ENCODE measurements at regions of chr10 and their contacts with region 1.

Region 1: GRCh38 chr10:29496341-29497162 is 138.2 kb downstream of the SVIL start:
- DNase-seq: peak; percentile 80
- ATAC-seq: peak; percentile 87
- H3K4me3 Mint-ChIP-seq: no peak overlapping the region
- H3K27ac Mint-ChIP-seq: no peak overlapping the region
- H3K4me1 Mint-ChIP-seq: no peaks in the 10 kb centered on the region
- H3K27me3 Mint-ChIP-seq: no peaks in the 10 kb centered on the region
- CTCF ChIP-seq: peak; percentile 94

Region 2: DNA sequence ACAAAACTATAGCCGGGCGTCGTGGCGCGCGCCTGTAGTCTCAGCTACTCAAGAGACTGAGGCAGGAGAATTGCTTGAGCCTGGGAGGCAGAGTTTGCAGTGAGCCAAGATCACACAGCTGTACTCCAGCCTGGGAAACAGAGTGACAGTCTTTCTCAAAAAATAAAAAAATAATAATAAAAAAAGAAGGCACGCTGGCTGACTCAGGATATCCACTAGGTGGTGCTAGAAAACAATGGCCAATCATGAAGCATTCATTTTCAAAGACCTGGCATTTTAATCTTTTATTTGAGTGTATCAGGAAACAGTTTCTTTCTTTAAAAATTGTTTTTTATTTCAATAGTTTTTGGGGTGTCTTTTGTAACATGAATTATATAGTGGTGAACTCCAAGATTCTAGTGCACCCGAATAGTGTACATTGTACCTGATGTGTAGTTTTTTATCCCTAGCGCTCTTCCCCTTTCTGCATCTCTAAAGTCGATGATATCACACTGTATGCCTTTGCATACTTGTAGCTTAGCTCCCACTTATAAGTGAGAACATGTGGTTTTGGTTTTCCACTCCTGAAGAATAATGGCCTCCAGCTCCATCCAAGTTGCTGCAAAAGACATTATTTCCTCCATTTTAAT is 119.1 kb before region 1 on chr10:
- CTCF ChIA-PET with region 1: interaction called, 16 read pairs
- POLR2A ChIA-PET with region 1: no interaction called
- intact Hi-C with region 1: loop called (anchors 10 kb)
- DNase-seq: peak; percentile 4
- ATAC-seq: no peak
- H3K4me3 Mint-ChIP-seq: no peak overlapping the region
- H3K27ac Mint-ChIP-seq: no peak overlapping the region
- H3K4me1 Mint-ChIP-seq: peaks cover 7% of the 10 kb centered on the region
- H3K27me3 Mint-ChIP-seq: peaks cover 1% of the 10 kb centered on the region
- CTCF ChIP-seq: peak; percentile 78

Region 3: DNA sequence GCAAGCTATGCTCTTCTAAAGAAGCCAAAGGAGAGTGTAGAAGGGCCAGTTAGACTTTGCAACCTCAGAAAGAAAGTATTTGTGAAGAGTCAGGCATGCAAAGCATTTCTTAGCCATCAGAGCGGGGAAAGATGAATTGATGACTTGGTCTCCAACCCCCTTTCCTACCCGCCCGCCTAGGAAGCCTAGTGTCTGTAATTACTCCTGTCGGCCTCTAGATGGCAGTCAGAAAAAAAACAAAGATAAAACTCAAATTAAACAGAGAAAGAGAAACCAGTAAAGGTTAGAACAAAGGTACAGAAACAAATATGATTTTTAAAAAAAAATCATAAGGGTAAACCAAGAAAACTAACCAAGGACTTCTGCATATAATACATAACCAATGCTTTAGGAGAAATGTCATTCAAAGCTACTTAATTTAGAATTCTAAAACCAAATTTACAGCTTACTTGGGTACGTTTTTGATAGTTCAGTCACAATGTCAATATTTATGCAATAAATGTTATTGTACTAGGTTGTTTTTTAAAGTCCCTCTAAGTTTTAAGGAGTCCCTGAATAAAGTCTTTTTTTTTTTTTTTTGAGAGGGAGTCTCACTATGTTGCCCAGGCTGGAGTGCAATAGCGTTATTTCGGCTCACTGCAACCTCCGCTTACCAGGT is 110.1 kb before region 1 on chr10:
- CTCF ChIA-PET with region 1: interaction called, 12 read pairs
- POLR2A ChIA-PET with region 1: no interaction called
- intact Hi-C with region 1: loop called (anchors 10 kb)
- DNase-seq: peak; percentile 27
- ATAC-seq: peak; percentile 82
- H3K4me3 Mint-ChIP-seq: no peak overlapping the region
- H3K27ac Mint-ChIP-seq: no peak overlapping the region
- H3K4me1 Mint-ChIP-seq: peaks cover 3% of the 10 kb centered on the region
- H3K27me3 Mint-ChIP-seq: peaks cover 2% of the 10 kb centered on the region
- CTCF ChIP-seq: peak; percentile 61

Region 4: DNA sequence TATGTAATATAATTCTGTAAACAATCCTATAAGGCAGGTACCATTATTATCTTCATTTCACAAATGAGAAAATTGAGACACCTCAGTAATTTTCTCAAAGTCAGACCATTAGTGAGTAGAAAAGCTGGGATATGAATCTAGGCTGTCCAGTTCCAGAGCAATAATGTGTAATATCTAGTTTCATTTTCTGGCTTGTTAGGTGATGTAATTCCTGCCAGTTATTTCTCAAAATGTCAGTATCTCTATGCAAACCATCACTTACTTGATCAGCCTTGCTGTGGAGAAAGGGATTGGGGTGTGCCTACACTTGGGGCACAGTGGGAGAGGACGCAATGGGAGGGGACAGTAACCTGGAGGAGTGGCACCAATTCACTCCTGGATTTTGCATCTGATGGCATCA is 50.2 kb before region 1 on chr10:
- CTCF ChIA-PET with region 1: interaction called, 19 read pairs
- POLR2A ChIA-PET with region 1: no interaction called
- intact Hi-C with region 1: no loop called
- DNase-seq: no peak
- ATAC-seq: no peak
- H3K4me3 Mint-ChIP-seq: no peak overlapping the region
- H3K27ac Mint-ChIP-seq: peak overlapping the region; percentile 59
- H3K4me1 Mint-ChIP-seq: peaks cover 17% of the 10 kb centered on the region
- H3K27me3 Mint-ChIP-seq: no peaks in the 10 kb centered on the region
- CTCF ChIP-seq: no peak

Region 5: DNA sequence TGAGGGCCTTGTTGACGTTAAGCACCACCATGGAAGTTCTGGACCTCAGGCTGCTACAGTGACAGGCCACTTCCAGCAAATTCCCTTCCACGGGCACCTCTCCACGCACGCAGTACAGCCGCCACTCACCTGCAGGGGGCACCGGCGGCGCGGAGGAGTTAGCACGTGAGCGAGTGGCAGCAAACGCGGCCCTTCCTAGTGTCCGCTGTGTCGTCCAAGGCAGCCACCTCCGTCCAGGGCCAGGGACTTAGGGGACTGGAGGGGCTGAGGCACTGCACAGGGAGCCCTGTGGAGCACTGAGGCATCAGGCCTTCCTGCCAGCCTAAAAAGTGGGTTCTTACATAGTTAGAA is 26.2 kb before region 1 on chr10:
- CTCF ChIA-PET with region 1: interaction called, 37 read pairs
- POLR2A ChIA-PET with region 1: no interaction called
- intact Hi-C with region 1: no loop called
- DNase-seq: peak; percentile 51
- ATAC-seq: peak; percentile 58
- H3K4me3 Mint-ChIP-seq: no peak overlapping the region
- H3K27ac Mint-ChIP-seq: no peak overlapping the region
- H3K4me1 Mint-ChIP-seq: peaks cover 16% of the 10 kb centered on the region
- H3K27me3 Mint-ChIP-seq: no peaks in the 10 kb centered on the region
- CTCF ChIP-seq: peak; percentile 64

Region 6: DNA sequence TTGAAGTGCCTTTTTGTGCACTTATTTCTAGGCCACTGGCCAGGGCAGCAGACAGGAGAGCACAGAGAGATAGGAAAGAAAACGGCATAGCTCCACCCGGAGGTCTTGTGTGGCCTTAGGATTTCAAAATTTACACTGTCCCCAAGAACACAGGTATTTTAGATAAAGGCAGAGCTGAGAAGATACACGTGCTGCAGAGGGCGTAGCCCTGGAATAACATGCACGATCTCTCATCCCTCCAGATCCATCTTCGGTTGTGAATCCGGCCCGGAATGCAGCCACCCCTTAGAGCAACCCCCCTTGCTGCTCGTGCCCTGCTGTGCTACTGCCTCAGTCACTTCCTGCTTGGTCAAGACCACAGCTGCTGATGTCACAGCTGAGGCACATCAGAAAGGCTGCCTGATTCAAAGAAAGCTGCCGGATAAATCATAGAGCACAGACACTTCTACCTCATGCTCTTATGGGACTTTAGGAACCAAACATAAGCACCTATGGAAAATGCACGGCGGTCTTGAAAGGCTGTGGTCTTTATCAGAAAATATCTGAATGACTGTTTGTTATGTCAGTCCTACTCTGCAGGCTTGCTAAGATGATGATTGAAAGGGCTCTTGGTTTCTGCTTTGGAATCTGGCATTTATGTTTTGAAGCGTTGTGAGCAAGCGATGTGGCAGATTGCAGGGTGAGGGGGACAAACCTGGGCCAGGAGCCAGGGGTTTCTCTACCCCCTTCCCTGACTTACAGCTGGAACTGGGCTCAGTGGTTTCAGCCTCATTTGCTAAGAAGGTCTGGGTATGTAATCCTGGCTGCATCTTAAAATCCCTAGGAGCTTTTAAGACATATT is 13.7 kb before region 1 on chr10:
- CTCF ChIA-PET with region 1: interaction called, 25 read pairs
- POLR2A ChIA-PET with region 1: no interaction called
- intact Hi-C with region 1: no loop called
- DNase-seq: peak; percentile 86
- ATAC-seq: peak; percentile 88
- H3K4me3 Mint-ChIP-seq: peak overlapping the region; percentile 6
- H3K27ac Mint-ChIP-seq: peak overlapping the region; percentile 80
- H3K4me1 Mint-ChIP-seq: peaks cover 51% of the 10 kb centered on the region
- H3K27me3 Mint-ChIP-seq: no peaks in the 10 kb centered on the region
- CTCF ChIP-seq: no peak

Region 7: GRCh38 chr10:29517352-29517923 is 20.9 kb after region 1 on chr10:
- CTCF ChIA-PET with region 1: interaction called, 16 read pairs
- POLR2A ChIA-PET with region 1: no interaction called
- intact Hi-C with region 1: no loop called
- DNase-seq: peak; percentile 37
- ATAC-seq: peak; percentile 39
- H3K4me3 Mint-ChIP-seq: no peak overlapping the region
- H3K27ac Mint-ChIP-seq: no peak overlapping the region
- H3K4me1 Mint-ChIP-seq: peaks cover under 1% of the 10 kb centered on the region
- H3K27me3 Mint-ChIP-seq: no peaks in the 10 kb centered on the region
- CTCF ChIP-seq: peak; percentile 46